Activated naive CD4-positive, alpha-beta T cell treated with anti-CD3 and anti-CD28 coated beads for 36 hours (primary cell): ENCODE measurements at regions of chr11 and their contacts with region 1.

Region 1: GRCh38 chr11:86291466-86292262 is 10.4 kb upstream of the HIKESHI start:
- DNase-seq: peak; percentile 88
- H3K4me3 Mint-ChIP-seq: no peak overlapping the region
- H3K27ac Mint-ChIP-seq: peak overlapping the region; percentile 53
- H3K4me1 Mint-ChIP-seq: peaks cover 58% of the 10 kb centered on the region
- H3K27me3 Mint-ChIP-seq: no peaks in the 10 kb centered on the region

Region 2: DNA sequence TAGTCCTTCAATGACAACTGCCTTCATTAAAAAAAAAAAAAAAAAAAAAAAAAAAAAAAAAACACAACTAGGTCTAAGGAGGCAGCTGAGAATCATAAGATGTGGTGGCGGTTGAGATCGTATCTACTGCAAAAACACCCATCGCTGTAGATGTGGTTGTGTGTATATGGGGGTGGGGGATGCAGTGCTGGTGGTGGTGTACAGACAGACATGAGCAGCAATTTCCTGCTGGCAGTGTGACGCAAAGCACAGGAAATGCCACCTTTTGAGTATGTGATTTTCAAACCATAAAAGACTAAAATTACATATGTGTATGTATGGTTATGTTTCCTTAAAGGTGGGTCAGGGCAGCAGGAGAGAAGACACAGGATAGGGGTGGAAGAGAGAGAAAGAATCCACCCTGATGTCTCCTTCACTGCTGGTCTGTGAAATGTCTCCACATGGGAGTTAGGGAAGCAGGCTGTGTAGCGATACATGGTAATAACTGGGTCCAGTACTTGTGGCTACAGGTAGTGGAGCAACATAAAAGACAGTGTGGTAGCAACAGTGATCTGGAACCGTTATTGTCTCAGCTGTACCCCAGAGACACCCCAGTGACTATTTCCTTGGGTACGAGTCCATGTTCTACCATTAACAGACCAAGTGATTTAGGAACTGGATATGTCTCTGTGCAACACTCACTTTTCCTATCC is 538.6 kb before region 1 on chr11:
- CTCF ChIA-PET with region 1: no interaction called
- intact Hi-C with region 1: loop called (anchors 1 kb)
- DNase-seq: peak; percentile 94
- H3K4me3 Mint-ChIP-seq: peak overlapping the region; percentile 57
- H3K27ac Mint-ChIP-seq: peak overlapping the region; percentile 97
- H3K4me1 Mint-ChIP-seq: peaks cover 95% of the 10 kb centered on the region
- H3K27me3 Mint-ChIP-seq: no peaks in the 10 kb centered on the region

Region 3: GRCh38 chr11:85947431-85948272 is 344.0 kb before region 1 on chr11:
- CTCF ChIA-PET with region 1: interaction called, 4 read pairs
- intact Hi-C with region 1: loop called (anchors 1 kb)
- DNase-seq: peak; percentile 62
- H3K4me3 Mint-ChIP-seq: peak overlapping the region; percentile 1
- H3K27ac Mint-ChIP-seq: peak overlapping the region; percentile 87
- H3K4me1 Mint-ChIP-seq: peaks cover 46% of the 10 kb centered on the region
- H3K27me3 Mint-ChIP-seq: no peaks in the 10 kb centered on the region

Region 4: DNA sequence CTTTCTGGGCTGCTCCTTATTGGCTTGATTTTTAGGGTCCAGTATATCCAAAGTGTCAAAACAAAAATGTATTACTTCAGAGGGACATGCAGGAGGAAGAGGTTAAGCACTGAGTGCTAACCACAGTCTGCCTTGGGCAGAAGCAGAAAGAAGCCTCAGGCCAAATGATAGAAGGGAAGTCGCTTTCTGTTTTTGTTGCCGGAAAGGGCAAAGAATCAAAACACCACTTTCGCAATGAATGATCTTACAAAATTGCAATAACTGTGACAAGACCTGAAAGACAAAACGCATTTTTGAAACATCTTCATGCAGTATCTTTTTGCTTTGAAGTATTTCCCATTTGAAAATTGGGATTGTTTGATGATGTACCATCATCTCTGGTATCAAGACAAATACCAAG is 152.7 kb before region 1 on chr11:
- CTCF ChIA-PET with region 1: no interaction called
- intact Hi-C with region 1: loop called (anchors 2 kb)
- DNase-seq: peak; percentile 48
- H3K4me3 Mint-ChIP-seq: no peak overlapping the region
- H3K27ac Mint-ChIP-seq: peak overlapping the region; percentile 25
- H3K4me1 Mint-ChIP-seq: peaks cover 13% of the 10 kb centered on the region
- H3K27me3 Mint-ChIP-seq: no peaks in the 10 kb centered on the region

Region 5: DNA sequence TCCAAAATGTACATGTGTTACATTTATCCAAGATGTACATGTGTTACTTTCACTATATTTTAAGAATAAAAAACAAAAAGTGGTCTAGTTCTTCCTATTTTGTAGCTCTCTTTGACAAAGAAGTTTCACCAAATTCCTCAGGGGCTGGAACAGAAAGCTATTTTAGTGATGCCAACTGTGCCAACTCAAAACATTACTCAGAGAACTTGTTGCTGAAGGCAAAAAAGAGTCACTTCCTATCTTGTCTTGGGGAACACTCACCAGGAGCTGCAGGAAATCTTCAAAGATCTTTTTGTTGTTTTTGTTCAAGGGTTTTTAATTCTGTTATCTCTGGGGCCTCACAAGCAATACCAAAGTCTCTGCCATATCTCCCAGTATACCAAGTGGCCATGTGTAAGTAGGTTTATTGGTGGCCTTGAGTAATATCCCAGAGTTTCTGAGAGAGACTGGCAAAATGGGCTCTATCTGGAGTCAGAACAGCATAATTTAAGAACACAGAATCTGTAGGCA is 60.7 kb before region 1 on chr11:
- CTCF ChIA-PET with region 1: interaction called, 6 read pairs
- intact Hi-C with region 1: loop called (anchors 1 kb)
- DNase-seq: no peak
- H3K4me3 Mint-ChIP-seq: no peak overlapping the region
- H3K27ac Mint-ChIP-seq: peak overlapping the region; percentile 15
- H3K4me1 Mint-ChIP-seq: peaks cover 62% of the 10 kb centered on the region
- H3K27me3 Mint-ChIP-seq: no peaks in the 10 kb centered on the region

Region 6: DNA sequence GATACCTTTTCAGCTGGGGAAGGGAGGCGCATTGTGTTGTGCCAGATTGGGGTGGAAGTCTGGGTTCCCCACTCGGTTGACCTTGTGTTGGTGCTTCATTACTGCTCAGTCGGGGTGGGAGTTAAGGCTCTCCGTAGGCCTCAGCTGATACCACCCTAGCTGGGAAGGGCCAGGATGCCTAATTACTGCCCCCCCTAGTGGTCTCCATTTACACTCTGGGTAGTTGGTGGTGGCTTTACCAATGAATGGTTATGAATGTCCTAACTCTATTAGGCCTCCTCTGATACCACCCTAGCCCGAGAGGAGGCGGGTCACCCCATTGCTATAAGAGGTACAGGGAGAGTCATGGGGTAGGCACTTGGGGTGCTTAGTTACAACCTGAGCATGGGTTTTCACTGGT is 17.2 kb before region 1 on chr11:
- CTCF ChIA-PET with region 1: no interaction called
- intact Hi-C with region 1: no loop called
- DNase-seq: no peak
- H3K4me3 Mint-ChIP-seq: no peak overlapping the region
- H3K27ac Mint-ChIP-seq: no peak overlapping the region
- H3K4me1 Mint-ChIP-seq: peaks cover 55% of the 10 kb centered on the region
- H3K27me3 Mint-ChIP-seq: no peaks in the 10 kb centered on the region

Region 7: GRCh38 chr11:86499721-86500141 is 208.1 kb after region 1 on chr11:
- CTCF ChIA-PET with region 1: no interaction called
- intact Hi-C with region 1: loop called (anchors 5 kb)
- DNase-seq: no peak
- H3K4me3 Mint-ChIP-seq: no peak overlapping the region
- H3K27ac Mint-ChIP-seq: no peak overlapping the region
- H3K4me1 Mint-ChIP-seq: no peaks in the 10 kb centered on the region
- H3K27me3 Mint-ChIP-seq: no peaks in the 10 kb centered on the region